RWPE1 (cell line): ENCODE measurements at regions of chr16 and their contacts with region 1.

Region 1: GRCh38 chr16:67546761-67547422 is 15.4 kb upstream of the CTCF start:
- DNase-seq: peak; percentile 77
- H3K27ac ChIP-seq: peak overlapping the region; percentile 79
- CTCF ChIP-seq: peak; percentile 96

Region 2: DNA sequence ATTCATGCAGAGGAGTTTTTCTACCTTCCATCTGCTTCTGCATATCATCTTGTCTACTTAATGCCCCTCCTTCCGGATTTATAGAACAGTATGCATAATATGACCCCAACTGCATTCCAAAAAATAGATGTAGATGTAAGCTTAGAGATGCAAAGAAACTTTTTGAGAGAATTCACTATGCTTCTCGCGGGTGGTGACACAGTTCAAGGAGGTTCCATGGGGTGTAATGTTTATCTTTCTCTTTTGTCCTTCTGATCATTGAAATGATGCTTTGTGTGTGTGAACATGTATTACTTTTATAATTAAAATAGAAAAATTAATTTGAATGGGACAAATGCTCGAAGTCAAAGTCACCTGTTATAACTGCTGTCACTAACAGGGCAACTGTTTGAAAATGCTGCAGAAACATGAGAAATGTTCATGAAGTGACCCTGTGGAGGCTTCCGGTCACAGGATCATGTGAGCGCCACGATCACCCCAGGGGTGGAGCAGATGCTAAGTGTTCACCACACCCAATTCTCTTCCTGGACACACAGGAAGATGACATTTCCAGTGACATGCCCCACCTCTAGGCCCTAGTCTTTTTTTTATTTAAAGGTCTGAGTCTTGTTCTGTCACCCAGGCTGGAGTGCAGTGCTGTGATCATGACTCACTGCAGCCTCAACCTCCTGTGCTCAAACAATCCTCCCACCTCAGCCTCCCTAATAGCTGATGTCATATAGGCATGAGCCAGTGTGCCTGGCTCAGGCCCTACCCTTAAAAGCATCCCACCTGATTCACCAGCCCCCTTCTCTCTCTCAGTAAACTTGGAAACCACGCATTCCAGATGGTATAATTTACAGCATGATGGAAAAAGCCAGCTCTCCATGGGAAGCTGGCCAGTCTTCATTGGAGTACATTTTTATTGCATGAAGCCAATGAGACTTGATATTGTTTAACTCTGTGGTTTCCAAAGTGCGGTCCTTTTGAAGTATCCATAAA is 42.6 kb before region 1 on chr16:
- CTCF ChIA-PET with region 1: no interaction called
- POLR2A ChIA-PET with region 1: no interaction called
- DNase-seq: no peak
- H3K27ac ChIP-seq: peak overlapping the region; percentile 53
- CTCF ChIP-seq: no peak

Region 3: DNA sequence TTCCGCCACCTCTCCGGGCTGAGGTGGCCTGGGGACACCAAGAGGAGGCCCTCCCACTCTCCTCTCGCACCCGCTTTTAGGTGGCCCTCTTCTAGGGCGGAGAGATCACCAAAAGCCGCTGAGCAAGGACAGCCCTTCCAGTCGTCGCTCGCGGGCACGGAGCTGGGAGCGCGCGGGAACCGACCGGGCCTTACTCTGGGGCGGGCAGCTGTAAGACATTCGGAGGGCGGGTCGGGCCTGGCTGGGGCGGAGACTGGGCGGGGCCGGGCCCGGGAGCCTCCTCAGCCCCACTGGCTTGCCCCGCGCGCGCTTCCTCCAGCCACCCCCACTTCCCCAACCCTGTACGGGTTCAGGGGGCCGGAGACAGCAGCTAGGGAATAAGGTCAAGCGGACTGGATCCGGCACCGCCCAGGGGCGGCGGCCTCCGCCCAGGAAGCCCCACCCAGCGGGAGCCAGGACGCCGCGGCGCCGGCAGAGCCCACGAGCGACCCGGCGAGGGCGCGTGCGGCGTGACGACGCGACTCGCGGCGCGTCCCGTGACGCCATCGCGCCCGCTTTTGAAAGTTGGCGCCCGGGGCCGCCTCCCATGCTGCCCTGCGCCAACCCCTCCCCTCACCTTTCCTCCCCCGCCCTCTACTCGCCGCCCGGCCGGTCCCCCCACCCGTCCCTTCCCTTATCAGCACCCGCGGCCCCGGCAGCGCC is 15.1 kb after region 1 on chr16:
- CTCF ChIA-PET with region 1: interaction called, 15 read pairs
- POLR2A ChIA-PET with region 1: interaction called, 6 read pairs
- DNase-seq: peak; percentile 96
- H3K27ac ChIP-seq: peak overlapping the region; percentile 99
- CTCF ChIP-seq: no peak

Region 4: GRCh38 chr16:67667817-67668494 is 121.1 kb after region 1 on chr16:
- CTCF ChIA-PET with region 1: interaction called, 15 read pairs
- POLR2A ChIA-PET with region 1: no interaction called
- DNase-seq: peak; percentile 90
- H3K27ac ChIP-seq: peak overlapping the region; percentile 80
- CTCF ChIP-seq: peak; percentile 71